PC-9 (cell line): ENCODE measurements at regions of chr16 and their contacts with region 1.

Region 1: GRCh38 chr16:2251483-2252240 is at the start of gene ECI1:
- DNase-seq: peak; percentile 84 to 98
- H3K4me3 ChIP-seq: peak within 1 kb of the TSS; percentile 91
- H3K27ac ChIP-seq: peak within 1 kb of the TSS; percentile 86
- H3K4me1 ChIP-seq: peaks cover 22% of the 10 kb centered on the region
- H3K27me3 ChIP-seq: no peaks in the 10 kb centered on the region
- CTCF ChIP-seq: peak; percentile 69
- total RNA-seq, gene ECI1: 131 and 216 TPM in 2 replicates

Region 2: DNA sequence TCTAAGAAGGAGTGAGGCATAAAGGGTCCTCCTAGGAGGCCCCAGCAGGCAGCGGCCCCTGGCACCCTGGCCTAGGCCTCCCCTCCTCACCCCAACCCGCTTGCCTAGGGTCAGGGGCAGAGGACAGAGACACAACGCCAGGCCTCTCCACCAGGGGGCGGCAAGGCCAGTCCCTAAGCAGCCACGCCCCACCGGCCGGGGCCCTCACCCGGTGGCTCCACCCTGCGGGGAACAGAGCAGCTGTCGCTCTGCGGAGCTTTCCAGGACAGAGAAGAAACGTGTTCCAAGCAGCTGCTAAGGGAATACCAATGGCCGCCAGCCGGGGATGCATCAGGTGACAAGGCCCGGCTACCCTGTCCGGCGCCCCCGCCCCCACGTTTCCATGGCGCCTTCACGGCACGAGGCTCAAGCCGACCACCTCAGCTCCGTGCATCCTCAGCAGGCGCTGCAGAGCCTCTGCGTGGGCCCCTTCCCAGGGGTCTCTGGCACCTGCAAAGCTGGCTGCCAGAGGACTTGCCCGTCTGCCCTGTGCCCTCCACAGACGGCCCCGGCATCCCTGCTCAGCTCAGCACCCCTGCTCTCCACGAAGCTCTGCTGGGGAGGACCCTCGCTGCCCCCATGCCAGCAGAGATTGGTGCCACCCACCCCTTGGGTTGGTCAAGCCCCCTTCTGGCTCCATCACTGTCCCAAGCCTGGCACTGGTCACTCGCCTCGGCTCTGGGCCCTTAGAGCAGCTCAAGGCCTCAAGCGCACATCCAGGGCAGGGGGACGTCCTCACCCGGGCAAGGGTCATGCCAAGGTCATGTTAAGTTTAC is 247.6 kb before region 1 on chr16:
- CTCF ChIA-PET with region 1: interaction called, 11 read pairs
- POLR2A ChIA-PET with region 1: no interaction called
- intact Hi-C with region 1: loop called (anchors 10 kb)
- DNase-seq: peak; percentile 56 to 82
- H3K4me3 ChIP-seq: no peak overlapping the region
- H3K27ac ChIP-seq: no peak overlapping the region
- H3K4me1 ChIP-seq: peaks cover 13% of the 10 kb centered on the region
- H3K27me3 ChIP-seq: no peaks in the 10 kb centered on the region
- CTCF ChIP-seq: peak; percentile 85

Region 3: GRCh38 chr16:2009789-2010510 is 241.7 kb before region 1 on chr16 and contains the start of gene ZNF598:
- CTCF ChIA-PET with region 1: interaction called, 11 read pairs
- POLR2A ChIA-PET with region 1: no interaction called
- intact Hi-C with region 1: loop called (anchors 10 kb)
- DNase-seq: peak; percentile 52 to 82
- H3K4me3 ChIP-seq: peak within 1 kb of the TSS; percentile 88
- H3K27ac ChIP-seq: peak within 1 kb of the TSS; percentile 86
- H3K4me1 ChIP-seq: peaks cover 27% of the 10 kb centered on the region
- H3K27me3 ChIP-seq: no peaks in the 10 kb centered on the region
- CTCF ChIP-seq: no peak
- total RNA-seq, gene ZNF598: 68.4 and 72.5 TPM in 2 replicates

Region 4: GRCh38 chr16:2213817-2214720 is 37.6 kb before region 1 on chr16:
- CTCF ChIA-PET with region 1: no interaction called
- POLR2A ChIA-PET with region 1: no interaction called
- intact Hi-C with region 1: loop called (anchors 5 kb)
- DNase-seq: no peak
- H3K4me3 ChIP-seq: peak overlapping the region; percentile 85
- H3K27ac ChIP-seq: no peak overlapping the region
- H3K4me1 ChIP-seq: peaks cover 28% of the 10 kb centered on the region
- H3K27me3 ChIP-seq: no peaks in the 10 kb centered on the region
- CTCF ChIP-seq: no peak

Region 5: DNA sequence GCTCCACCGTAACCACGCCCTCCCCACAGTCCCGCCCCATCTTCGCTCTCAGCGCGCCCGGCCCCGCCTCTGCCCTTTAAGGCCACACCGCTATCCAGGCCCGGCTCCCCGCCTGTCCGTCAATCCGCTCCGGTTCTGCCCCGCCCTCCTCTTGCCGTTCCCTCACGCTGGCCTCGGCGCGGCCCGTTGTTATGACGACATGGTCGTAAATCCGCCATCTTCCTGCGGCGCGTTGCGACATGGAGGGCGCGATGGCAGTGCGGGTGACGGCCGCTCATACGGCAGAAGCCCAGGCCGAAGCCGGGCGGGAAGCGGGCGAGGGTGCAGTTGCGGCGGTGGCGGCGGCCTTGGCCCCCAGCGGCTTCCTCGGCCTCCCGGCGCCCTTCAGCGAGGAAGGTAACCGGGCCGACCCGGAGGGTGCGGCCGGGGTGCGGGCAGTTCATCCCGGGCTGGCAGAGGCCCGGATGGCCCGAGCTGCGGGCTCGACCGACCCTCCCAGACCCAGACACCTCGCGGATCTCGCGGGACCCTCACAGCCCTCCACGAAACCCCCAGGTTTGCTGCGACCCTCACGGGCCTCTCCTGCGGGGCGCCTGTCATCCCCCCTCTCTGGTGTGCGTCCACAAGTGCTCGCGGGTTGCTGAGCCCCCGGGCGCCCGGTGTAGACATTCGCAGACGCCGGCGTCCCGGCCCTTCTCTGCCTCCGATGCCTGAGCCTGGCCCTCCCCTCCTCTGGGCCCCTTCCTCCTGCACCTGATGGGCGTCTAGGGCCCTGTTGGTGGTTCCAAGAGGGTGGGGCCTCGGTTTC is 28.1 kb before region 1 on chr16 and contains the start of gene E4F1:
- CTCF ChIA-PET with region 1: no interaction called
- POLR2A ChIA-PET with region 1: interaction called, 3 read pairs
- intact Hi-C with region 1: loop called (anchors 2 kb)
- DNase-seq: peak; percentile 96 to 100
- H3K4me3 ChIP-seq: peak within 1 kb of the TSS; percentile 83
- H3K27ac ChIP-seq: peak within 1 kb of the TSS; percentile 24
- H3K4me1 ChIP-seq: peaks cover 20% of the 10 kb centered on the region
- H3K27me3 ChIP-seq: no peaks in the 10 kb centered on the region
- CTCF ChIP-seq: no peak
- total RNA-seq, gene E4F1: 38.8 and 41.1 TPM in 2 replicates

Region 6: DNA sequence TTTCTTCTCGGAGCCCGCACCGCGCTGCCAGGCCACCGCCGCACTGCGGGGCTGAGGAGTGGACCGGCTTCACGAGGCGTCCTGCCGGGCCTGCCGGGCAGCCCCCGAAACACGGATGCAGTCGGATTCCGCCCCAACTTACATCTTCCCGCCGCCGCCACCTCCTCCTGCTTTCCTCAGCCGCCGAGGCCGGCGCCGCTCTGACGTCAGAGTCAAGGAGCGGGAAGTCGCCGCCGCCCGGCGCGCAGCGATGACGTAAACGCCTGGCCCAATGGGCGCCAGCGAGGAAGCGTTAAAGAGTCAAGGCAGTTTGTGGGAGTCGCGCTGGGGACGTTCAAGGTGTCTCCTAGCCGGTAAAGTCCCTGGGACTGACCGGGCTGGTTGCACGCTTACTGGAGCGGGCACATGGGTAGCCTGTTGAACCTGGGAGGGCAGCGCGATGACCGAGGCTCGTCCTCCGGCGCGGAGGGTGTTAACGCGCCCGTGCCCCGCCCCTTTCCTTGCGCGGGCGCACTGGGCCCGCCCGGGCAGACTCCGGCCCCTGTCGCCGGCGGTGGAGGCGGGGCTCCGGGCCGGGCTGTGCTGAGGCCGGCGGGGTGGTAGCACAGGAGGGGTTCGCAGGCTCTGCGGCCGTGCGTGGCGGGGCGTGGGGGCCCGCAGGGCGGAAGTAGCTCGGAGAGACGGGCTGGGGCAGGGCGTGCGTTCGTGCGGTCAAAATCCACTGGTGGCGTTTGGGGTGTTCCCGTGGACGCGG is 16.4 kb after region 1 on chr16 and contains the start of gene RNPS1:
- CTCF ChIA-PET with region 1: no interaction called
- POLR2A ChIA-PET with region 1: interaction called, 12 read pairs
- intact Hi-C with region 1: no loop called
- DNase-seq: peak; percentile 83 to 96
- H3K4me3 ChIP-seq: peak within 1 kb of the TSS; percentile 92
- H3K27ac ChIP-seq: peak within 1 kb of the TSS; percentile 89
- H3K4me1 ChIP-seq: peaks cover 14% of the 10 kb centered on the region
- H3K27me3 ChIP-seq: no peaks in the 10 kb centered on the region
- CTCF ChIP-seq: no peak
- total RNA-seq, gene RNPS1: 229 and 250 TPM in 2 replicates

Region 7: GRCh38 chr16:2295056-2295798 is 43.6 kb after region 1 on chr16:
- CTCF ChIA-PET with region 1: no interaction called
- POLR2A ChIA-PET with region 1: no interaction called
- intact Hi-C with region 1: no loop called
- DNase-seq: no peak
- H3K4me3 ChIP-seq: no peak overlapping the region
- H3K27ac ChIP-seq: no peak overlapping the region
- H3K4me1 ChIP-seq: no peaks in the 10 kb centered on the region
- H3K27me3 ChIP-seq: peaks cover 5% of the 10 kb centered on the region; the same call in 1 of the 2 replicates
- CTCF ChIP-seq: no peak

Region 8: GRCh38 chr16:2333772-2334379 is 82.2 kb after region 1 on chr16:
- CTCF ChIA-PET with region 1: no interaction called
- POLR2A ChIA-PET with region 1: no interaction called
- intact Hi-C with region 1: no loop called
- DNase-seq: peak; percentile 43 to 45
- H3K4me3 ChIP-seq: no peak overlapping the region
- H3K27ac ChIP-seq: no peak overlapping the region
- H3K4me1 ChIP-seq: 0 out of 2 replicates have a peak, but pooled peaks cover 4% of the 10 kb centered on the region
- H3K27me3 ChIP-seq: peaks cover 2% of the 10 kb centered on the region; the same call in 1 of the 2 replicates
- CTCF ChIP-seq: no peak

Region 9: GRCh38 chr16:2500918-2501750 is 249.5 kb after region 1 on chr16:
- CTCF ChIA-PET with region 1: no interaction called
- POLR2A ChIA-PET with region 1: no interaction called
- intact Hi-C with region 1: loop called (anchors 5 kb)
- DNase-seq: peak in 1 of 2 experiments; percentile 85
- H3K4me3 ChIP-seq: no peak overlapping the region
- H3K27ac ChIP-seq: no peak overlapping the region
- H3K4me1 ChIP-seq: 0 out of 2 replicates have a peak, but pooled peaks cover 5% of the 10 kb centered on the region
- H3K27me3 ChIP-seq: no peaks in the 10 kb centered on the region
- CTCF ChIP-seq: peak; percentile 96